ENCODE measurements at regions of chr9 and their contacts with region 1.

Region 1: DNA sequence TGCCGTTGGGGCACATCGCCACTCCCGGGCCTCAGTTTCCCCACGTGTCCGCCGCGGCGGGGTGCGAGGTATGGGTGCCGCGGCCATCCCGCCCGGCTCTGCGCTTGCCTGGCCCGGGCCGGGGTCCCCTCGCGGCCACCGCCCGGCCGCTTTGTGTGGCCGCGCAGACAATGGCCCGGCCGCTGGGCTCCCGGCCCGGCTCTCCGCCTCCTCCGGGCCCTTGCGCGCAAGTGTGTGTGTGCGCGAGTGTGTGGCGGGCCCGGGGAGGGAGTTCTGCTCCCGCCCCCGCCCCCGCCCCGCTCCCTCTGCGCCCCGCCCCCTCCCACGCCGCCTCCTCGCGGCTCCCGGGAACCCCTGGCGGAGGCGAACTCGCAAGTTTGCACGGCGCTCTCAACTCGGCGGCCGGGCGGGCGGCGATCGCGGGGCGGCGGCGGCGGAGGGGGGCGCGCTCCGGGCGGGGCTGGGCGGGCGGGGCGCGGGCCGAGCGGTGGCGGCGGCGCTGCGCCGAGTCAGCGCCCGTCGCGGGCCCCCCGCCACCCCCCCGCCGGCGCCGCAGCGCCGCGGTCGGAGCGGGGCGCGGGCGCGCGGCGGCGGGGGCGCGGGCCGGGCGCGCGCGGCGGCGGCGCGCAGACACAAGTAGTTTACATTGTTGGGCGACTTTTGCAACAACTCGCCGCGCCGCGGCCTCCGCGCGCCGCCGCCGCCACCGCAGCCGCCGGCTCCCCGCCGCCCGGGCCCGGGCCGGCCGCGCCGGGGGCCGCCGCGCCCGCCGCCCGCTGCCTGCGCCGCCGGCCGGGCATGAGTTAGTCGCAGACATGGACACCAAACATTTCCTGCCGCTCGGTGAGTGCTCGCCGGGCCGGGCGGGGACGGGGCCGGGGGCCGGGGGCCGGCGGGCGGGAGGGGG is at the start of gene RXRA:
- DNase-seq: peak; percentile 92
- ATAC-seq: peak; percentile 71
- total RNA-seq, gene RXRA: 89.0 TPM

Region 2: DNA sequence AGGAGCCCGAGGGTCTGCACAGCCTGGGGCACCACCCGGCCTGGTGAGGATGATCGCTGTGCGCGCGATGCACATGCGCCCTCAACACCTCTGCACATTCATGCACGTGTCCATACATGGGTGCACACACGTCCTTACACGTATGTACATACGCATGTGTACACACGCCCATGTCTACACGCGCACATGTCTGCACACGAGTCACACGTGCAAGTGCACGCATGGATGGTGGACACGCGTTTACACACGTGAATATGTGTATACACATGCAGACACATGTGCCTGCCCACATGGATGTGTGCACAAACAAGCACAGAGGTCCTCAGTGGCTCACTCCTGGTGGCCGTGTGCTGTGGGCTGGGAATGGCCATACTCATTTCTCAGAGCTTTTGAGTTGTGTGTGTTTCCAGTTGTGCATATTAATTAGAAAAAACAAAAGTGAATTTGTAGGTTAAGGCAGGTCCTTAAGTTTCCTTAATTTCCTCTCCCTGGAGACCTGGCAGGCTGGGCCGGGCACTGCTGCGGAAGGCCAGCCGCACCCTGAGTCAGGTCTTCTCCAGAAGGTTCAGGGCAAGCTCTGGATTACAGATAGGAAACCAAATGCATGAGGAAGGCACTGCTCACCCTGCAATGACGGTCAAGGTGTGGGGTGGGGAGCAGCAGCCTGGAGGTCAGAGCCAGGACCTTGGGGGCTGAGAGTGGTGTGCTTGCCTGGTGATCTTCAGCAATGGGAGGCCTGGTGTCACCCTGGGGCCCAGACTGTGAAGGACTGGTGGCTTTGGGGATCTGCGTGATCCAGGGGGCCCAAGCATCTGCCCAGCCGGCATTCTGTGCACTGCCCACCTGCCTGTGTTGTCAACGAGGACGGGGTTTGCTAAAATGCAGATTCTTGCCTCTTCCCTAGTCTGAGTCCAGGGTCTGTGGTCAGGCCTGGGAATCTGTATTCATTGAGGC is 160.4 kb before region 1 on chr9:
- intact Hi-C with region 1: loop called (anchors 5 kb)
- DNase-seq: peak; percentile 70
- ATAC-seq: no peak

Region 3: GRCh38 chr9:134267881-134268724 is 58.0 kb before region 1 on chr9:
- intact Hi-C with region 1: no loop called
- DNase-seq: peak; percentile 62
- ATAC-seq: peak; percentile 87

Region 4: GRCh38 chr9:134371731-134372130 is 45.7 kb after region 1 on chr9:
- intact Hi-C with region 1: loop called (anchors 5 kb)
- DNase-seq: peak; percentile 91
- ATAC-seq: peak; percentile 2

Measured in Right ventricle myocardium superior (tissue), 1 donor.